ENCODE measurements at regions of chr2 and their contacts with region 1.

Region 1: GRCh38 chr2:189661148-189661956 is at the start of gene ASNSD1:
- DNase-seq: peak; percentile 95 to 100 (median 99)
- ATAC-seq: peak; percentile 89
- H3K4me3 ChIP-seq: peak within 1 kb of the TSS; percentile 97
- H3K4me3 Mint-ChIP-seq: no peak within 1 kb of the TSS
- H3K27ac ChIP-seq: peak within 1 kb of the TSS; percentile 87 to 93
- H3K27ac Mint-ChIP-seq: no peak within 1 kb of the TSS
- H3K4me1 ChIP-seq: peaks cover 41% of the 10 kb centered on the region
- H3K4me1 Mint-ChIP-seq: peaks cover 60% of the 10 kb centered on the region
- H3K27me3 ChIP-seq: no peaks in the 10 kb centered on the region
- H3K27me3 Mint-ChIP-seq: no peaks in the 10 kb centered on the region
- CTCF ChIP-seq: peak; percentile 92
- total RNA-seq, gene ASNSD1: 38.9 to 40.6 TPM

Region 2: DNA sequence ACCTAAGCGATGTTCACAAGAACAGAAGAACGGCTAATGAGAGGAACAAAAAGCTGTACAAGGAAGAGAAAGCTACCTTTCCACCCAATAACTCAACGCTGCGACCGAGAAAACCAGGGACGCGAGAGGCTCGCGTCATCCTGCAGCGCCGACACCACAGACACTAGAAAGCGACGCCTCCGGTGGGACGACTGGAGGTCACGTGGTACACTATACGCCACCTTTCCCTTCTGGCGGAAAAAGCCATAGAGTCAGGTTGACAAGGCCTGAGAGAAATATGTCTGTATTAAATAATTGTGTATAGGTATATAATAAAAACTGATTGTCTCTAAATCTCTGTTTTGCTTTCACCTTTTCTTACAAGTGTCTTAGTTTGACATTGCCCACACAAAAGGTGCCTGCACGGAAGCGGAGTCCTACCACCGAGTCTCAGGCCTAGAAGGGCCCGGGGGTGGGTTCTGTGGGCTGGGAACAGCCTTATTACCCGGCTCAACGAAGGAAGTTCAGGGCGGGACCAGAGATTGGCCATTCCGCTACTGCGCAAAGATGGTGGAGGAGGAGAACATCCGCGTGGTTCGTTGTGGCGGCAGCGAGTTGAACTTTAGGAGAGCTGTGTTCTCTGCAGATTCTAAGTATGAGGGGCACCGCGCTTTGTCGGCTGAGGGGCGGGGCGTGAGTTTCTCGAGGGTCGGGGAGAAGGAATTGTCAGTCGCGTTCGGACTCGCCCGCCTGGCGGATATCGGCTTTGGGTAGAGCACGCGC is 220.2 kb before region 1 on chr2 and contains the start of gene WDR75:
- CTCF ChIA-PET with region 1: no interaction called
- POLR2A ChIA-PET with region 1: interaction called, 5 read pairs
- intact Hi-C with region 1: loop called in 1 of 2 experiments (anchors 10 kb)
- DNase-seq: peak; percentile 85 to 96 (median 90)
- ATAC-seq: peak; percentile 93
- H3K4me3 ChIP-seq: peak within 1 kb of the TSS; percentile 78
- H3K4me3 Mint-ChIP-seq: no peak within 1 kb of the TSS
- H3K27ac ChIP-seq: peak within 1 kb of the TSS; percentile 90 to 97
- H3K27ac Mint-ChIP-seq: peak within 1 kb of the TSS; percentile 97
- H3K4me1 ChIP-seq: peaks cover 21% of the 10 kb centered on the region
- H3K4me1 Mint-ChIP-seq: peaks cover 16% of the 10 kb centered on the region
- H3K27me3 ChIP-seq: no peaks in the 10 kb centered on the region
- H3K27me3 Mint-ChIP-seq: no peaks in the 10 kb centered on the region
- CTCF ChIP-seq: no peak
- total RNA-seq, gene WDR75: 38.1 to 45.3 TPM

Region 3: DNA sequence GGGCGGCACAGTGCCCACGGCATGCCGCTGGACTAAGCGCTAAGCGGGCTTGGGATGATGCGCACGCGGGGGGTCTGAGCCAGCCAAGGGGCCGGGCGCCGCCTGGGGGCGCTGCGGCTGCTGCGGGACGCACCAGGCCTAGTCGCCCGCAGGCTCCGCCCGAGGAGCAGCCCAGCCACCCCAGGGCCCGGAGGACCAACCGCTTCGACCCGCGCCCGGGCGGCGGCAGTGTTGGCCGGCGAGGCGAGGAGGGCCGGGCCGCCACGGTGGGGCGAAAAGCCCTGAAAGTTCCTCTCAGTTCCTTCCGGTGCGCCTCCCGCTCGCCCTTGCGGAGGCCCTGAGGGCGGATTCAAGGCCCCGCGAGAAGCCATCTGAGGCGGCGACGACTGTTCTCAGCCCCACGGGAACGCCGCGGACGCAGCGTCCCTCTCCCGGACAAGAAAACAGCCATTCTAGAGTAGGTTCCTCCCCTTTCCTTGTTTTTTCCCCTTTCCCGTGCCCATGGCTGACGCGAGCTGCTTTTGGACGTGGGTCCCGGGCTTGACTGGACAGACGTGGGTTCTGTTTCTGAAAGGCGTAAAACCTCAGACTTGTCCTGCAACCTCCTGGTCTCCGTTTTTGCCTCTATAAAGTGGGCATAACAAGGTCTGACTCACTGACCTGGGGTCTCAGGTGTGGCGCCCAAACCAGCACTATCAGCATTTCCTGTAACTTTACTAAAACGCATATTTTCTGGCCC is 13.2 kb after region 1 on chr2 and contains the start of gene ANKAR:
- CTCF ChIA-PET with region 1: interaction called, 41 read pairs
- POLR2A ChIA-PET with region 1: interaction called, 63 read pairs
- intact Hi-C with region 1: loop called (anchors 1 kb)
- DNase-seq: peak; percentile 61 to 93 (median 74)
- ATAC-seq: peak; percentile 93
- H3K4me3 ChIP-seq: peak within 1 kb of the TSS; percentile 71
- H3K4me3 Mint-ChIP-seq: peak within 1 kb of the TSS; percentile 95
- H3K27ac ChIP-seq: peak within 1 kb of the TSS; percentile 73 to 81
- H3K27ac Mint-ChIP-seq: peak within 1 kb of the TSS; percentile 98
- H3K4me1 ChIP-seq: peaks cover 21% of the 10 kb centered on the region
- H3K4me1 Mint-ChIP-seq: peaks cover 29% of the 10 kb centered on the region
- H3K27me3 ChIP-seq: no peaks in the 10 kb centered on the region
- H3K27me3 Mint-ChIP-seq: no peaks in the 10 kb centered on the region
- CTCF ChIP-seq: peak; percentile 76
- total RNA-seq, gene ANKAR: 7.9 to 8.0 TPM

Region 4: DNA sequence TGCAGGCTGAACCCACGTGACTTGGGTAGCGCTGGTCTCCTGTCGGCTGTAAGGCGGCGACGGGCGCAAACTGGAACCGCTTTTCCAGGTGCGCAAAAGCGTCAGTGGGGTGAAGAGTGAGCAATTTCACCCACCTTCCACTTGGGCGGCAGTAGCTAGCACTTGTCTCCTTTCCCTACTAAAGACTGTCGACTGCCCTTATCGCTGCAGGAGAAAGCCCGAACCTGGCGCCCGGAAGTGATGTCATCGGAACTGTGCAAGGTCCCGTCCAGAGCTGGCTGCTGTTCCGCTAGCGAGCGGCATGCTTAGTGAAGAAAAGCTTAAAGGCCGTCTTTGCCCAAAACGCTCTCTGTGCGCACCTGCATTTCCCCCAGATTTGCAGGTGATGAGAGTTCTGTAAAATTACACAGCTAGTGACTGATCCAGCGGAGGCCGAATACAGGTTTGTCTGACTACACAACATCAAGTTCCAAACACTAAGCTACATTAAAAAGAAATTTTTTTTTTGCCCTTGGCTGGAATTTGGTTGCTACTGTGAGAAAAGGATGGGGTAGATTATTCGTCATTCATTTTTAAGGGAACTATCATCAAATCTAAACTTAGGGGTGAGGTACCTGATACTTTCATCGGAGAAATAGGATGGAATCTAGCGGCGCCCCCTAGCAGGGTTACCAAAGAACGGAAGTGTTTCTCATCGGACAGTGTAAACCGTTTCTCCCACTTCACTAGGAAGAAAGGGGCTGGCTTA is 101.4 kb after region 1 on chr2 and contains the start of gene OSGEPL1:
- CTCF ChIA-PET with region 1: interaction called, 16 read pairs
- POLR2A ChIA-PET with region 1: interaction called, 43 read pairs
- intact Hi-C with region 1: loop called in 1 of 2 experiments (anchors 1 kb)
- DNase-seq: peak; percentile 84 to 96 (median 92)
- ATAC-seq: peak; percentile 92
- H3K4me3 ChIP-seq: peak within 1 kb of the TSS; percentile 78
- H3K4me3 Mint-ChIP-seq: peak within 1 kb of the TSS; percentile 100
- H3K27ac ChIP-seq: peak within 1 kb of the TSS; percentile 87 to 91
- H3K27ac Mint-ChIP-seq: peak within 1 kb of the TSS; percentile 100
- H3K4me1 ChIP-seq: peaks cover 9% of the 10 kb centered on the region
- H3K4me1 Mint-ChIP-seq: peaks cover 17% of the 10 kb centered on the region
- H3K27me3 ChIP-seq: no peaks in the 10 kb centered on the region
- H3K27me3 Mint-ChIP-seq: no peaks in the 10 kb centered on the region
- CTCF ChIP-seq: peak; percentile 73
- total RNA-seq, gene OSGEPL1: 3.3 to 3.7 TPM

Region 5: DNA sequence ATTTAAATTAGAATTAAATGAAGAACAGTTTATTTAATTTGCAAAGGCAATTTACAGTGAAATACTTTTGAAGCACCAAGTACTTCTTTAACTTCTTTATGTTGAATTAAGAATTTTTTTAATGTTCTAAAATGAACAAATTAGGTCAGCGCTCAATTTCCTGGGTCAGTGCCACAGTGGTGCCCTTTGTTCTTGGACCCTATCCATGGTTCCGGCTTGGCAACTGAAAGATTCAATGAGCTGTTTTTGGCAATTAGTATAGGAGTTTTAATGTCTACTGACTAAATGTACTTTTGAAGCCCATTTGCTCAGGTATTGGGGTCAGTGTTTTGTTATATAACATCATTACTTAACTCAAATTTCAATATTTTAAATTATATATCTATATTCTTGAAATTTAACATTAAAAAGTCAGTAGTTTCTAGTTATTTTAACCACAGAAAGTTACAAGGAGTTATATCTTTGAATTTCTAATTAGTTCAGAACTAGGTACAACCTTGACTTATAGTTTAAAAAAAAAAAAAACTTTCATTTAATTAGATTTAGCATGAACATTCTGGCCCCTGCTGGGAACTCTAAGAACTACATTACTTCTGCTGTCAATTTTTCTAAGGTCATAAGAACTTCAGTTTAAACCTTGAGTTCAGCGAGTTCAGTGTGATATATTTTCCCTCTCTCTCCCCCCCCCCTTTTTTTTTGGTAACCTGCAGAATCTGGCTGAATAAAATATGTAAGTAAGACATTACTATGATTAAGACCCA is 408.8 kb after region 1 on chr2:
- CTCF ChIA-PET with region 1: no interaction called
- POLR2A ChIA-PET with region 1: no interaction called
- intact Hi-C with region 1: loop called (anchors 2 to 5 kb)
- DNase-seq: peak in 5 of 14 experiments; percentile 3 to 65 (median 58)
- ATAC-seq: peak; percentile 49
- H3K4me3 ChIP-seq: no peak overlapping the region
- H3K4me3 Mint-ChIP-seq: no peak overlapping the region
- H3K27ac ChIP-seq: no peak overlapping the region
- H3K27ac Mint-ChIP-seq: no peak overlapping the region
- H3K4me1 ChIP-seq: no peaks in the 10 kb centered on the region
- H3K4me1 Mint-ChIP-seq: no peaks in the 10 kb centered on the region
- H3K27me3 ChIP-seq: no peaks in the 10 kb centered on the region
- H3K27me3 Mint-ChIP-seq: peaks cover 4% of the 10 kb centered on the region
- CTCF ChIP-seq: peak; percentile 41

Region 6: DNA sequence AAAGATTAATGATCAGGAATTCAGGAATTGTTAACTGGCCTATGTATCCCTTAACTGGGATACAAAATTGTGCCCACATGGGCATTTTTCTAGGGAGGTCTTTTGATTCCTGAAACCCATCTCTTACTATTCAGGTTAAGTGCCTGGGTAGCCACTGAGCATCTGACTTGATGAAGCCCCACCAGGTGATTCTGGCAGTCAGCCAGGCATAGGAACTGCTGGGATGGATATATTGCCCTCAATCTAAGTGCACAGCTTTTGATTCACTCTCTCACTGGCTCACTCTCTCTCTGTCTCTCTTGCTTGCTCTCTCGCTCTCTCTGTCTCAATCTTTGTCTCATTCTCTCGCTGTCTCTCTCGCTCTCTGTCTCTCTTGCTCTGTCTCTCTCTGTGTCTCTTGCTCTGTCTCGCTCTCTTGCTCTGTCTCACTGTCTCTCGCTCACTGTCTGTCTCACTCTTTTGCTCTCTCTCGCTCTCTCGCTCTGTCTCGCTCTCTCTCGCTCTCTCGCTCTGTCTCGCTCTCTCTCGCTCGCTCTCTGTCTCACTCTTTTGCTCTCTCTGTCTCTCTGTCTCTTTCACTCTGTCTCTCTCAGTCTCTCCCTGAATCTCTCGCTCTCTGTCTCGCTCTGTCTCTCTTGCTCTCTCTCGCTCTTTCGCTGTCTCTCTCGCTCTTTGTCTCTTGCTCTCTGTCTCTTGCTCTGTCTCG is 704.3 kb after region 1 on chr2:
- CTCF ChIA-PET with region 1: no interaction called
- POLR2A ChIA-PET with region 1: no interaction called
- intact Hi-C with region 1: loop called in 1 of 2 experiments (anchors 5 kb)
- DNase-seq: peak in 1 of 14 experiments; percentile 7
- ATAC-seq: no peak
- H3K4me3 ChIP-seq: no peak overlapping the region
- H3K4me3 Mint-ChIP-seq: no peak overlapping the region
- H3K27ac ChIP-seq: no peak overlapping the region
- H3K27ac Mint-ChIP-seq: no peak overlapping the region
- H3K4me1 ChIP-seq: no peaks in the 10 kb centered on the region
- H3K4me1 Mint-ChIP-seq: peaks cover 17% of the 10 kb centered on the region
- H3K27me3 ChIP-seq: no peaks in the 10 kb centered on the region
- H3K27me3 Mint-ChIP-seq: no peaks in the 10 kb centered on the region
- CTCF ChIP-seq: no peak

Region 7: GRCh38 chr2:190415794-190416775 is 754.7 kb after region 1 on chr2:
- CTCF ChIA-PET with region 1: no interaction called
- POLR2A ChIA-PET with region 1: no interaction called
- intact Hi-C with region 1: no loop called
- DNase-seq: peak in 2 of 14 experiments; percentile 28 to 48
- ATAC-seq: peak; percentile 71
- H3K4me3 ChIP-seq: no peak overlapping the region
- H3K4me3 Mint-ChIP-seq: peak overlapping the region; percentile 30
- H3K27ac ChIP-seq: peak overlapping the region; percentile 34 to 75
- H3K27ac Mint-ChIP-seq: peak overlapping the region; percentile 78
- H3K4me1 ChIP-seq: peaks cover 30% of the 10 kb centered on the region
- H3K4me1 Mint-ChIP-seq: peaks cover 96% of the 10 kb centered on the region
- H3K27me3 ChIP-seq: no peaks in the 10 kb centered on the region
- H3K27me3 Mint-ChIP-seq: no peaks in the 10 kb centered on the region
- CTCF ChIP-seq: no peak

Region 8: DNA sequence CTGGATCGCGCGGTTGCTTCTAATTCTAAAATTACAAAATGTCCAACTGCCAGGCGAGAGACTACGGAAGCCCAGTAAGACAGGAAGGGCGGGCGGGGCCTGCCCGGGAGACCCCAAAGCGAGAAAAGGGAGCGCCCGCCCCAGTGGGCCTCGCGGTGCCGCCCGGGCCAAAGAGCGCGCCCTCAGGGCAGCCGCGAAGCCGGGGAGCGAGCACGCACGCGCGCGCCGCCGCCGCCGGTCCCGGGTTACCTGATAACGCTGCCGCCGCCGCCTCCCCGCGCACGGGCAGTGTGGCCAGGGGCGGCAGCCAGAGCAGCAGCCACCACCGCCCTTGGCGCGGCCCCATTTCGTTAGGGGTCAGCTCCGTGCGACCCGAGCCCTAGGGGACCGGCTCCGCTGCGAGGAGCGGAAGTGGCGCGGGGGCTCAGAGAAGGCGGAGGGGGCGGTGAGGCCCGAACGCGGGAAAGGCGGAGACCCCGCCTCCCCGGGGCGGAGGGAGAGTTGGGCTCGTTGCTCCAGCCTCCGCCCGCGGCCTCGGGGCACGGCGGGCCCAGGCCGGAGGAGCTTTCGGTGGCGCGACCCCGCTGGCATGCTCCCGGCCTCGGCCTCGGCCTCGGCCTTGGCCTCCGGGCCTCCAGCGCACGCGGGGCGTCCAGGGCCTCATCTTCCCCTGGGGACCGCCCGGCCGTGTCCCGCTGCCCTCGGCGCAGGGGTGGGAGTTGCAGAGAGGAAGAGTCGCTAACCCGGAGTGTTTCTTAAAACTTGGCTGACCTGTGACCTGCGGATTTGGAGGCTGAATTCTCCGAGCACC is 873.2 kb after region 1 on chr2 and contains the start of gene NEMP2:
- CTCF ChIA-PET with region 1: no interaction called
- POLR2A ChIA-PET with region 1: no interaction called
- intact Hi-C with region 1: loop called in 1 of 2 experiments (anchors 10 kb)
- DNase-seq: peak; percentile 53 to 91 (median 76)
- ATAC-seq: peak; percentile 59
- H3K4me3 ChIP-seq: peak within 1 kb of the TSS; percentile 77
- H3K4me3 Mint-ChIP-seq: peak within 1 kb of the TSS; percentile 94
- H3K27ac ChIP-seq: peak within 1 kb of the TSS; percentile 87 to 95
- H3K27ac Mint-ChIP-seq: peak within 1 kb of the TSS; percentile 99
- H3K4me1 ChIP-seq: peaks cover 40% of the 10 kb centered on the region
- H3K4me1 Mint-ChIP-seq: peaks cover 73% of the 10 kb centered on the region
- H3K27me3 ChIP-seq: no peaks in the 10 kb centered on the region
- H3K27me3 Mint-ChIP-seq: no peaks in the 10 kb centered on the region
- CTCF ChIP-seq: no peak
- total RNA-seq, gene NEMP2: 11.6 to 12.2 TPM